ENCODE measurements at regions of chr6 and their contacts with region 1.

Region 1: GRCh38 chr6:149153100-149153499 is 164.4 kb upstream of the TAB2 start:
- DNase-seq: no peak
- ATAC-seq: no peak
- H3K4me3 Mint-ChIP-seq: peak overlapping the region; percentile 49
- H3K27ac Mint-ChIP-seq: peak overlapping the region; percentile 94
- H3K4me1 Mint-ChIP-seq: peaks cover 76% of the 10 kb centered on the region
- H3K27me3 Mint-ChIP-seq: no peaks in the 10 kb centered on the region

Region 2: GRCh38 chr6:149082286-149082707 is 70.8 kb before region 1 on chr6:
- CTCF ChIA-PET with region 1: interaction called, 26 read pairs
- DNase-seq: peak; percentile 94
- ATAC-seq: peak; percentile 79
- H3K4me3 Mint-ChIP-seq: peak overlapping the region; percentile 18
- H3K27ac Mint-ChIP-seq: peak overlapping the region; percentile 96
- H3K4me1 Mint-ChIP-seq: peaks cover 87% of the 10 kb centered on the region
- H3K27me3 Mint-ChIP-seq: no peaks in the 10 kb centered on the region